Activated B cell treated with CpG ODN at 0.5 μM for 24 hours (primary cell): ENCODE measurements at regions of chr18 and their contacts with region 1.

Region 1: GRCh38 chr18:50356036-50356945 is 18.6 kb upstream of the SKA1 start:
- DNase-seq: no peak
- ATAC-seq: peak; percentile 75
- H3K4me3 Mint-ChIP-seq: peak overlapping the region; percentile 50
- H3K27ac Mint-ChIP-seq: peak overlapping the region; percentile 30
- H3K4me1 Mint-ChIP-seq: peaks cover 19% of the 10 kb centered on the region
- H3K27me3 Mint-ChIP-seq: peaks cover 6% of the 10 kb centered on the region
- CTCF ChIP-seq: no peak

Region 2: DNA sequence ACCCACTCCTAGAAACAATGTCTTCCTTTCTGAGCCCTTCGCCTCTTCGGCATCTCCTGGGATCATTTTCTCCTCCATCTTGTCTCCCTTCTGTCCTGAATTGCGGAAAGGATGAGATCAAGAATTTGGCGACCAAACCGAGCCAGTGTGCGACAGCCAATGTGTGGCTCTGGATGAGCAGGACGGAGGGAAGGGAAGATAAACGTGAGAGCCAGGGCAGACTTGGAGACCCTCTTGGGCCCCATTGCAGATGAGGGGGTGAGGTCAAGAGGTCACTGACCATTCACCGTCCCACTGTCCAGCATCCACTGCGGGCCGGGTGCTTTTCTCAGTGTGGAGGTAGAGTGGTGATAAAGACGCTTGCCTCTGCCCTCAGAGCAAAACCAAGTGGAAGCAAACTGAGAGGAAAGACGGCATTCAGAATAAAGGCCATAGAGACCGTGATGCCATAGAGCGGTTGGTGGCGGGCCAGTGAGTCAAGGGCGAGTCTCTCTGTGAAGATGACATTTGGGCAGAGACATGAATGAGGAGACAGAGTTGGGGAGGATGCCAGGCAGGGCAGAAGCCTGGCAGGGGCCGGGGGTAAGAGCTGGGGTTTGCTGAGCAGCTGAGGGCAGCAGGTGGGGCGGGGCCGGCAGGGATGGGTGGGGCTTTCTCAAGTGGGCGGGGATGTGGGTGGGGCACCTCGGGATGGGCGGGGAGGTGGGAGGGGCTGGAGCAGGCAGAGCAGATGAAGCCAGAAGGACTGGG is 598.6 kb before region 1 on chr18:
- CTCF ChIA-PET with region 1: no interaction called
- POLR2A ChIA-PET with region 1: no interaction called
- intact Hi-C with region 1: no loop called
- DNase-seq: no peak
- ATAC-seq: no peak
- H3K4me3 Mint-ChIP-seq: no peak overlapping the region
- H3K27ac Mint-ChIP-seq: no peak overlapping the region
- H3K4me1 Mint-ChIP-seq: no peaks in the 10 kb centered on the region
- H3K27me3 Mint-ChIP-seq: peaks cover 8% of the 10 kb centered on the region
- CTCF ChIP-seq: no peak

Region 3: DNA sequence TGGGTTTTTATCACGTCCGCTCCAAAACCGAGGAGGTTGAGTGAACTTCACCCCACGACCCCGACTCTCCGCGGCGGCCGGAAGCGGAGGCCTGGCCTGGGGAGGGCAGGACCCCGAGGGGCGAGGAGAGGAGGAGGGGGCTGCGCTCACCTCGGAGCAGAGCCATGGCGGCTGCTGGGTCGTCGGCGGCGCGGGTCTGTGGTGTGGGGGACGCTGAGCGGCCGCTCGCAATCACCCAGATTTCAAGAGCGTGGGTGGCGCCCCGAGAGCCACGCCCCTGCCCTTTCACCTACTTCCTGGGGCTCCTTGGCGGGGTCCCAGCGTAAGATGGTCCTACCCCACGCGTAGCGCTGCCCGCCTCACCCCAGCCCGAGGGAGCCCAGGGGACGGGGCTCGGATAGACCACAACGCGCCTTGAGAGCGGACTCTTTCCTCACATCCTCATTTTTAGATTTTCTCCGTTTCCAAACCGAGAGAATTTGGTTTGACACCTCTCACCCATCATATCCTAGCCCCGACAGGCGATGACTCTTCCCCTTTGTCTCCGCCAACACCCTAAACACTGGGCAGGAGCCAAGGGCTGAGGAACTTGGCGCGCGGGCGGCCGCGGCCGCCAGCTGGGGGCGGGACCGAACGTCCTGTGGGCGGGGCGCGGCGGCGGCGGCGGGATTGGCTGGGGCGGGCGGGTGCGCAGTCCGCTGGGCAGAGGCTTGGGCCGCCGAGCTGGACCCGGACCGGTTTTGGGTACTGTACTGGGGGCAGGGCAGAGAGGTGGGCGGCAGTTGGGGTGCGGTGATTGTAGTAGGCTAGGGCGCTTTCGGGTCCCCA is 542.8 kb before region 1 on chr18 and contains the start of gene ACAA2:
- CTCF ChIA-PET with region 1: no interaction called
- POLR2A ChIA-PET with region 1: no interaction called
- intact Hi-C with region 1: loop called (anchors 5 kb)
- DNase-seq: peak; percentile 79
- ATAC-seq: peak; percentile 88
- H3K4me3 Mint-ChIP-seq: peak within 1 kb of the TSS; percentile 96
- H3K27ac Mint-ChIP-seq: peak within 1 kb of the TSS; percentile 95
- H3K4me1 Mint-ChIP-seq: peaks cover 24% of the 10 kb centered on the region
- H3K27me3 Mint-ChIP-seq: no peaks in the 10 kb centered on the region
- CTCF ChIP-seq: no peak
- total RNA-seq, gene ACAA2: 24.9 and 26.9 TPM in 2 replicates

Region 4: DNA sequence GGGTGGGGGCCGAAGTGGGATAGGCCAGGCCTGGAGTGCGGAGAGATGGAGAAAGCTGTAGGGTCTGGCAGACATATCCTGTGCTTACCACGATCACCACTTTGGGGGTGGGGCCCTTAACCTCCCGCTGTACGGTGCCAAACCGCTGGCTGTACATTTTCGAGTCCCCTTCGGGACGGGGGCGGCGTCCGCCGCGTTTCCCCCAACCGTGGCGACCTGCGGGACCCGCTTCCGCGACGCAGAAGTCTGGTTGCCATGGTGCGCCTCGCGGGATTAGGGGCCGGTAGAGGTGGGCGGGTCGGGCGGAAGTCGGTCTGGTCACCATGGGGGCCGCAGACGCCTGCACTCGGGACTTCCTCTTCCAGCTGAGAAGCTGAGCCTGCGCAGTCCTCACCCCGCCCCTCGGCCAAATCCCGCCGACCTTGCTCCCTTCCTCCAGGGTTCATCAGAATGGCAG is 90.0 kb before region 1 on chr18 and contains the start of gene CFAP53:
- CTCF ChIA-PET with region 1: interaction called, 30 read pairs
- POLR2A ChIA-PET with region 1: interaction called, 4 read pairs
- intact Hi-C with region 1: loop called (anchors 1 kb)
- DNase-seq: peak; percentile 91
- ATAC-seq: peak; percentile 80
- H3K4me3 Mint-ChIP-seq: peak within 1 kb of the TSS; percentile 89
- H3K27ac Mint-ChIP-seq: peak within 1 kb of the TSS; percentile 88
- H3K4me1 Mint-ChIP-seq: peaks cover 28% of the 10 kb centered on the region
- H3K27me3 Mint-ChIP-seq: no peaks in the 10 kb centered on the region
- CTCF ChIP-seq: no peak
- total RNA-seq, gene CFAP53: 0.27 and 0.29 TPM in 2 replicates

Region 5: DNA sequence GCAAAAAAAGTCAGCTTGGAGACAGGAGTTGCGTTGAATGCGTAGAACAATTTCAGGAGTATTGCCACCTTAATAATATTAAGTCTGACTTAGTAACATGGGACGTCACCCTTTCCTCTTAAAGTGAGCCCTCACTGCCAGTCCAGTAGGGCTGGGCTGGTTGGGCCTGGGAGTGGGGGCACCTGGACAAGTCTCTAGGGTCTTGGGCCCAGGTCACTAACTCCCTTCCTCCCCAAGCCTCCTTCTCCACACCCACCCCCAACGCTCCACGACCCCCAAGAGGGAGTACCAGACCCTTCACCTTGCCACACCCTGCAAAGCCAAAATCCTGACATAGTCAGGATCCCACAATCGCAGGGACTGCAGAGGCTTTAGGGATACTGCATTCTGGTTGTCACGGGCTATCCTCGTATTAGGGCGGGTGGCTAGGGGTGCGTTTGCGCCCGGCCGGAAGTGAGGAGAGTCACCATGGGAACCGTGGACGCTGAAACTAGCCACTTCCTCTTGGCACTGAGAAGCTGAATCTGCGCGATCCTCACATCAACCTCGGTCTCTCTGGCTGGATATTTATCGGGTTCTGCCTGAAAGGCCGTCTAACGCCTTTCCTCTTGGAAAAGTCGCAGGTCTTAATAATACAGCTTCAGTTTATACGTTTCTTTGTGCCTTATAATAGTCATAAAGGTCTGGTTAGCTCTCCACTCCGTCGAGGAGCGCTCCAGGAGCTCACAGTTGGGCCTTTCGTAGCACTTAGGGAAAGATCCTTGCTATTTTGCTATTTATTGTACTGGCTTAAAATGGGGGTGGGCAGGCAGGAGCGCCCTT is 58.5 kb before region 1 on chr18:
- CTCF ChIA-PET with region 1: interaction called, 8 read pairs
- POLR2A ChIA-PET with region 1: interaction called, 6 read pairs
- intact Hi-C with region 1: loop called (anchors 1 kb)
- DNase-seq: peak; percentile 73
- ATAC-seq: peak; percentile 99
- H3K4me3 Mint-ChIP-seq: peak overlapping the region; percentile 83
- H3K27ac Mint-ChIP-seq: peak overlapping the region; percentile 41
- H3K4me1 Mint-ChIP-seq: peaks cover 14% of the 10 kb centered on the region
- H3K27me3 Mint-ChIP-seq: no peaks in the 10 kb centered on the region
- CTCF ChIP-seq: no peak

Region 6: DNA sequence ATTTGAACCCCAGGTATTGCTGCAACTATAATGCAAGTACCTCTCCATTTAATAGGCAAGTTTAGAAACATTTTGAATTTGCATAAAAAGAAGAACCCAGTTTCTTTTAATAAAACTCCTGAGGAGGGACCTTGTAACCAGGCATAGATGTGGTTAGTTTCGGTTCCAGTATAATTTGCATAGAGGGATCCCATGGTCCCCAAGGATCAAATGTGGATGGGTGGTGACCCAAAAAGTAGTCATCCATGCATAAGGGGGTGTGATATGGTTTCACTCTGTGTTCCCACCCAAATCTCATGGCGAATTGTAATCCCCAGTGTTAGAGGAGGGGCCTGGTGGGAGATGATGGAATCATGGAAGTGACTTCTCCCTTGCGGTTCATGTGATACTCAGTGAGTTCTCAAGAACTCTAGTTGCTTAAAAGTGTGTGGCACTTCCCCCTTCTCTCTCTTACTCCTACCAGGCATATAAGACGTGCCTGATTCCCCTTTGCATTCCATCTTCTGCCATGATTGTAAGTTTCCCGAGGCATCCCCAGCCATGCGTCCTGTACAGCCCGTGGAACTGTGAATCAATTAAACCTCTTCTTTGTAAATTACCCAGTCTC is 21.6 kb before region 1 on chr18:
- CTCF ChIA-PET with region 1: interaction called, 13 read pairs
- POLR2A ChIA-PET with region 1: no interaction called
- intact Hi-C with region 1: loop called (anchors 1 kb)
- DNase-seq: no peak
- ATAC-seq: peak; percentile 91
- H3K4me3 Mint-ChIP-seq: peak overlapping the region; percentile 64
- H3K27ac Mint-ChIP-seq: peak overlapping the region; percentile 48
- H3K4me1 Mint-ChIP-seq: peaks cover 77% of the 10 kb centered on the region
- H3K27me3 Mint-ChIP-seq: peaks cover 3% of the 10 kb centered on the region
- CTCF ChIP-seq: no peak

Region 7: DNA sequence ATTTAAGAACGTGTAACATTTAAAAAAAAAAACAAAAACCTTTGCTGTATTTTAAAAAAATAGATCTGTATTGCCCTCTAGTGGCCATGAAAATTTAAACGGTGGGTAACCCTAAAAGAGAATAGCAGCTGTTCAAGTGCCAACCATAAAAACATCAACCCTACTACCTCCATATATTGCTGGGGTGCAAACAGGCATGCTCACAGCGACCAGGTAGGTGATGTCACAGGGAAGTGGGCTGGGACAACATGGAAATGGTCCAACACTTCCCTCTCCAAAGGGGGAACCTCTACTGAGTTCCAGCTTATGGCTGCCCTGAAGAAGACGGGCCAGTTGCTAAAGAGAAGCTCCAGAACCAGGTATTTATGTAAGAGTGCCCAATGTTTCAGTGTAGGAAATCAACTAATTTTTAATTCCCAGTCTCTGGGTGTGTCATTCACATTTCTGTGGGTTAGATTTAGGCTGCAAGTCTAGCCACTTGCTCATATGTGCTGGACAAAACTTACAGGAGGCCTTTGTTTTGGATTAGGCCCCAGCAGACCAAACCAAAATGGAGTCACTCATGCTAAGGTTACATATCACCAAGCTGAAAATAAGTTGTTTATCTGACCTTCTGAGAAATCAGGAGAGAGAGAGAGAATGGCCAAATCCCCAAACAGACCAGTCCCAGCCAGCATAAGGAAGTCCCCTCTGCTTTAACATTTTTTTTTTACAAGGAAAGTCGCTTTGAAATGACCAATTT is 73.1 kb after region 1 on chr18:
- CTCF ChIA-PET with region 1: interaction called, 3 read pairs
- POLR2A ChIA-PET with region 1: no interaction called
- intact Hi-C with region 1: loop called (anchors 5 kb)
- DNase-seq: no peak
- ATAC-seq: no peak
- H3K4me3 Mint-ChIP-seq: no peak overlapping the region
- H3K27ac Mint-ChIP-seq: no peak overlapping the region
- H3K4me1 Mint-ChIP-seq: no peaks in the 10 kb centered on the region
- H3K27me3 Mint-ChIP-seq: peaks cover 5% of the 10 kb centered on the region
- CTCF ChIP-seq: no peak